Activated CD4-positive, alpha-beta T cell treated with anti-CD3 and anti-CD28 coated beads, Interleukin-2, amount 10 ng/mL, durations not matched to agents 7 days and 5 days (primary cell): ENCODE measurements at regions of chr5 and their contacts with region 1.

Region 1: DNA sequence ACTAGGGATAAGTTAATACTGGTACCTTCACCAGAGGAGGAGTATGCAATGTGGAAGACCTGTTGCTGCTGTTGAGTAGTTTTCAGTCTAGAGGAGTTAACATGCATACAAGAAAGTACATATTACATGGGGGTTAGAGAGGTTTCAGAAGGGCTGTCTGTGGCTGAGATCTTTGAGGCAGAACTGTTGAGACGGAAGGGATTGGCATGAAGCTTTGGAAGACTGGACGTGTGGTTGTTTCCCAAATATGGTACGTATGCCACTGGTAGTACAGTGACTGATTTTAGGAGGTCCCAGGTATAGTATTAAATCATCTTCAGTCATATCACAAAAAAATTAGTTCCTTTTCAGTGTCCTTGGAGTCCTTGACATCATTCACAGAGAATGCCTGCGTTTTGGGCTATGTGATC is 17.6 kb downstream of the TNFAIP8 start:
- DNase-seq: no peak
- H3K4me3 Mint-ChIP-seq: no peak overlapping the region
- H3K27ac Mint-ChIP-seq: no peak overlapping the region
- H3K4me1 Mint-ChIP-seq: peaks cover 62% of the 10 kb centered on the region
- H3K27me3 Mint-ChIP-seq: no peaks in the 10 kb centered on the region

Region 2: GRCh38 chr5:119393746-119394145 is 20.3 kb after region 1 on chr5:
- CTCF ChIA-PET with region 1: interaction called, 11 read pairs
- POLR2A ChIA-PET with region 1: no interaction called
- DNase-seq: no peak
- H3K4me3 Mint-ChIP-seq: no peak overlapping the region
- H3K27ac Mint-ChIP-seq: peak overlapping the region; percentile 38
- H3K4me1 Mint-ChIP-seq: peaks cover 76% of the 10 kb centered on the region
- H3K27me3 Mint-ChIP-seq: no peaks in the 10 kb centered on the region

Region 3: GRCh38 chr5:119411935-119412602 is 38.6 kb after region 1 on chr5:
- CTCF ChIA-PET with region 1: no interaction called
- POLR2A ChIA-PET with region 1: no interaction called
- DNase-seq: peak; percentile 66
- H3K4me3 Mint-ChIP-seq: peak overlapping the region; percentile 67
- H3K27ac Mint-ChIP-seq: no peak overlapping the region
- H3K4me1 Mint-ChIP-seq: peaks cover 33% of the 10 kb centered on the region
- H3K27me3 Mint-ChIP-seq: peaks cover 9% of the 10 kb centered on the region